MCF 10A (cell line): ENCODE measurements at regions of chr7 and their contacts with region 1.

Region 1: GRCh38 chr7:38369816-38370493 is 96.5 kb upstream of the TARP start:
- DNase-seq: peak; percentile 84
- H3K4me3 Mint-ChIP-seq: no peak overlapping the region
- H3K27ac Mint-ChIP-seq: no peak overlapping the region
- H3K4me1 Mint-ChIP-seq: peaks cover 6% of the 10 kb centered on the region
- H3K27me3 Mint-ChIP-seq: peaks cover 12% of the 10 kb centered on the region
- CTCF ChIP-seq: peak; percentile 75

Region 2: GRCh38 chr7:37901236-37901827 is 468.6 kb before region 1 on chr7:
- CTCF ChIA-PET with region 1: interaction called, 27 read pairs
- POLR2A ChIA-PET with region 1: no interaction called
- intact Hi-C with region 1: no loop called
- DNase-seq: peak; percentile 53
- H3K4me3 Mint-ChIP-seq: no peak overlapping the region
- H3K27ac Mint-ChIP-seq: no peak overlapping the region
- H3K4me1 Mint-ChIP-seq: no peaks in the 10 kb centered on the region
- H3K27me3 Mint-ChIP-seq: peaks cover 35% of the 10 kb centered on the region
- CTCF ChIP-seq: peak; percentile 44

Region 3: DNA sequence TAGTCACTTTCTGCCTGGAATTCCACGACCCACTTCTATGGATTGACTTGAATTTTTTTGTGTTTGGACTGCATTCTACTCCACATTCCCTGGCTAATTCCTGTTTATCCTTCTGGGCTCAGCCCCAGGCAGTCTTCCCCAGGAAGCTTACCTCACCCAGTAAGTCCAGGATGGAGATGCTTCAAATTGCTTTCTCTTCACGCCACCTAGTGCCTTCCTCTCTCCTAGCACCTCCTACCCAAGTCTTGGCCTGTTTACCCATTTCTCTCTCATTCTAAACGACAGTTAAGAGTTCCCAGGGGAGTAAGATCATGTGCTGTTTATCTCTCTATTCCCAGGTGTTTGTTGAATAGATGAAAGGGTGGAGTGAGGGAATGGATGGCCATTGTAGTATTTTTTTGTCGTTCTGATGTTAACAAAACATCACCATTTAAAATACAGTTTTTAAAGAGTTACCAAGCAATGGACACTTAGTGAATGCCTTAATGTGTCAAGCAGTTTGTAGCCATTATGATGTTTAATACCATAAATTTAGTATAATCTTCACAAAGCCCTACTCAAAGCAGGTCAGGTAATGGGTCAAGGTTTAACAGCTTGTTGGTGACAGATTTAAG is 51.0 kb before region 1 on chr7:
- CTCF ChIA-PET with region 1: interaction called, 41 read pairs
- POLR2A ChIA-PET with region 1: no interaction called
- intact Hi-C with region 1: no loop called
- DNase-seq: peak; percentile 68
- H3K4me3 Mint-ChIP-seq: no peak overlapping the region
- H3K27ac Mint-ChIP-seq: no peak overlapping the region
- H3K4me1 Mint-ChIP-seq: peaks cover 7% of the 10 kb centered on the region
- H3K27me3 Mint-ChIP-seq: peaks cover 26% of the 10 kb centered on the region
- CTCF ChIP-seq: peak; percentile 49

Region 4: DNA sequence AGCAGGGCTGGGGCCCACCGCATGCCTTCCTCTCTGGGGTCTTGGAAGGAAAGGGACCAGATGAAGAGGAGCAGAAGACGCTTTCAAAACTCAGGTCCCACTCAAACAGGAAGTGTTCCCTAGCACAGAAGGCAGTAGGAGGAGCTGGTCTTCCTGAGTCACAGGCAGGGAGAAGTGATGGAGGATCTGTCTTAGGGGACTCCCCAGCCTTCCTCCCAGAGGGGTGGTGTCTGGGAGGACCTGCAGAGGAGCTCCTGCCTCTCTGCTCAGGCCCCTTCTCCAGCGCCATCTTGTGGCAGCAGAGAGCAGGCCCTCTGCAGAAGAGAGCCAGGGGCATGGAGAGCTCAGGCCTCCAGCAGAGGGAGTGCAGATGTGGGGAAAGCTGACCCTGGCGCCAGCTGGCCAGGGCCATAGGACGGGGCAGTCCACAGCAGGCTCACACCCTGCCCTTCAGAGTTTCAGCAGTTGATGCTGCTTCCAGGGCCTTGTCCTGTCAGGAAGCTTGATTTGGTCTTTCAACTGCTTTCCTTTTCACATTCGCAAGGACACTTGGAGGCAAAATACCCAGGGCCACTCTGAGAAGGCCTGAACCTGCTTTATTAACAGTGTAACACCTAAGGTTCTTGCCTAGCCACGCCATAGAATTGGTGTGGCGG is 34.3 kb before region 1 on chr7:
- CTCF ChIA-PET with region 1: interaction called, 34 read pairs
- POLR2A ChIA-PET with region 1: interaction called, 3 read pairs
- intact Hi-C with region 1: no loop called
- DNase-seq: peak; percentile 87
- H3K4me3 Mint-ChIP-seq: no peak overlapping the region
- H3K27ac Mint-ChIP-seq: no peak overlapping the region
- H3K4me1 Mint-ChIP-seq: no peaks in the 10 kb centered on the region
- H3K27me3 Mint-ChIP-seq: peaks cover 13% of the 10 kb centered on the region
- CTCF ChIP-seq: peak; percentile 81

Region 5: GRCh38 chr7:38351601-38352000 is 18.4 kb before region 1 on chr7:
- CTCF ChIA-PET with region 1: interaction called, 11 read pairs
- POLR2A ChIA-PET with region 1: no interaction called
- intact Hi-C with region 1: no loop called
- DNase-seq: no peak
- H3K4me3 Mint-ChIP-seq: no peak overlapping the region
- H3K27ac Mint-ChIP-seq: no peak overlapping the region
- H3K4me1 Mint-ChIP-seq: no peaks in the 10 kb centered on the region
- H3K27me3 Mint-ChIP-seq: no peaks in the 10 kb centered on the region
- CTCF ChIP-seq: no peak

Region 6: DNA sequence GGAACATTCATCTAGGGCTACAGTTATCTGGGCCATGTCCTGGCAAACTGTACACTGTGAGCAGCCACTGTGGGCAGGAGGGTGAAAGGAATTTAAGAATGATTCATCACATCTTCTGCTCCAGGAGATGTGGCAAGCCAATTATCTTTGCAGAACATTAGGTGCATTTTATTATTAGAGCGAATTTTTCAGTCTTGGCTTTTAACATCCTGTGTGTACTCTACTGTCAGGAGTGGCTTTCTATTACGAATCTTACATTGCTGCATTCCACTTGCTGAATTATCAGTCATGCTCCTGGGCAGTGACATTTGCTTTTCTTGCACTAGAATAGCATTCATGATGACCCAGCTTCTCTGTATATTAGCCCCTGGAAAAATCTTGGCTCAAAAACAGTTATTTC is 12.7 kb after region 1 on chr7:
- CTCF ChIA-PET with region 1: interaction called, 95 read pairs
- POLR2A ChIA-PET with region 1: no interaction called
- intact Hi-C with region 1: no loop called
- DNase-seq: peak; percentile 62
- H3K4me3 Mint-ChIP-seq: no peak overlapping the region
- H3K27ac Mint-ChIP-seq: no peak overlapping the region
- H3K4me1 Mint-ChIP-seq: peaks cover 11% of the 10 kb centered on the region
- H3K27me3 Mint-ChIP-seq: peaks cover 7% of the 10 kb centered on the region
- CTCF ChIP-seq: no peak